GM10248 (cell line): ENCODE measurements at regions of chr18 and their contacts with region 1.

Region 1: GRCh38 chr18:61891271-61891670 is 1.5 kb downstream of the RNF152 start:
- DNase-seq: no peak
- CTCF ChIP-seq: no peak

Region 2: GRCh38 chr18:61901323-61901986 is 10.2 kb after region 1 on chr18:
- CTCF ChIA-PET with region 1: interaction called, 10 read pairs
- POLR2A ChIA-PET with region 1: no interaction called
- DNase-seq: peak; percentile 70
- CTCF ChIP-seq: peak; percentile 91